Activated CD4-positive, alpha-beta memory T cell treated with anti-CD3 and anti-CD28 coated beads for 36 hours (primary cell): ENCODE measurements at regions of chr7 and their contacts with region 1.

Region 1: GRCh38 chr7:92708111-92709042 is 118.2 kb upstream of the FAM133B start:
- DNase-seq: no peak
- H3K4me3 Mint-ChIP-seq: no peak overlapping the region
- H3K27ac Mint-ChIP-seq: peak overlapping the region; percentile 88
- H3K4me1 Mint-ChIP-seq: peaks cover 55% of the 10 kb centered on the region
- H3K27me3 Mint-ChIP-seq: no peaks in the 10 kb centered on the region

Region 2: DNA sequence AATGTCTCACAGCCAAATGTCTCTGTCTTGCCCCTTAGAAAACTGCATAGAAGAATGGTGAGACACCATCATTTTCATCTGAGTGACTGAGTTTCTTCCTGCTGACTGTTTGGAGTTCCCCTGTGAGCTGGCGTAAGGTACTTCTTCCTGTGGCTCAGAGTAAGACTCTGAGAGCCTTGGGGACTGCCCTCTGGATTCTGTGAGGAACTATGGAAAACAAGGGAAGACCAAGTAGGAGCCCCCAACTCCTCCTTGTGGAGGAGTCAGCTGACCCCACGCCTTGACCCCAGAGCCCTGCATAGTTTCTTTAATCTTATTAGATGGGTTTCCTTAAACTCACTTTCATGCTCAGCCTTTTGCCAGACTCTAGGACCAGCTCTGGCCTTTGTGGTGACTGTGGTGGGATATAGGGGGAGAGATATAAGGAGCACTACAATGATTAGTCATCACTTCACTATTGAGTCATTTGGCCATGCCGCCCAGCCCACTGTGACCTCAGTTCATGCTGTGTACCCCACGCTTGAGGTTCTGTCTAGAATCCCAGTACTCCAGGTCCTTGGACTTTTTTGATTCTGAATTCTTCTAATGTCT is 66.4 kb before region 1 on chr7:
- CTCF ChIA-PET with region 1: no interaction called
- POLR2A ChIA-PET with region 1: interaction called, 3 read pairs
- intact Hi-C with region 1: loop called (anchors 1 kb)
- DNase-seq: peak; percentile 84
- H3K4me3 Mint-ChIP-seq: peak overlapping the region; percentile 9
- H3K27ac Mint-ChIP-seq: peak overlapping the region; percentile 96
- H3K4me1 Mint-ChIP-seq: peaks cover 86% of the 10 kb centered on the region
- H3K27me3 Mint-ChIP-seq: no peaks in the 10 kb centered on the region

Region 3: DNA sequence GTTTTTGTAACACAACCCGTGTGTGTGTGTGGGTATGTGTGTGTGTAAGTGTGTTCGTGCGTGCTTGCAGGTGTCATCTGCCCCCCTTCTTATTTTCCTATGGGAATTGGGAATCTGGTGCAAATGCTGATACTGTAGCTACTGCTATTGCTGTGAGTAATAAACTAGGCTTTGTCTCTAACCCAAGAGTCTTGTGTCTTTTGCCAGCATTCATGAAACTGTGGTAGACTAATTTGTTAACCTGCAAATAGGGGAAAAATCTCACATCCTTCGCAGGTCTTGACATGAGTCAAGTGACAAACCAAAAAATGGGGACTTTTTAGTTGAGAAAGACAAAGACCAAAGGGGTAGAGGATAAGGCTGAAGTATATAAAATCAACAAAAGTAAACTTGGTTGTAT is 60.3 kb before region 1 on chr7:
- CTCF ChIA-PET with region 1: no interaction called
- POLR2A ChIA-PET with region 1: no interaction called
- intact Hi-C with region 1: loop called (anchors 1 kb)
- DNase-seq: no peak
- H3K4me3 Mint-ChIP-seq: peak overlapping the region; percentile 16
- H3K27ac Mint-ChIP-seq: peak overlapping the region; percentile 96
- H3K4me1 Mint-ChIP-seq: peaks cover 91% of the 10 kb centered on the region
- H3K27me3 Mint-ChIP-seq: no peaks in the 10 kb centered on the region

Region 4: GRCh38 chr7:92751902-92752901 is 43.8 kb after region 1 on chr7:
- CTCF ChIA-PET with region 1: no interaction called
- POLR2A ChIA-PET with region 1: no interaction called
- intact Hi-C with region 1: loop called (anchors 2 kb)
- DNase-seq: no peak
- H3K4me3 Mint-ChIP-seq: no peak overlapping the region
- H3K27ac Mint-ChIP-seq: peak overlapping the region; percentile 72
- H3K4me1 Mint-ChIP-seq: peaks cover 63% of the 10 kb centered on the region
- H3K27me3 Mint-ChIP-seq: no peaks in the 10 kb centered on the region

Region 5: DNA sequence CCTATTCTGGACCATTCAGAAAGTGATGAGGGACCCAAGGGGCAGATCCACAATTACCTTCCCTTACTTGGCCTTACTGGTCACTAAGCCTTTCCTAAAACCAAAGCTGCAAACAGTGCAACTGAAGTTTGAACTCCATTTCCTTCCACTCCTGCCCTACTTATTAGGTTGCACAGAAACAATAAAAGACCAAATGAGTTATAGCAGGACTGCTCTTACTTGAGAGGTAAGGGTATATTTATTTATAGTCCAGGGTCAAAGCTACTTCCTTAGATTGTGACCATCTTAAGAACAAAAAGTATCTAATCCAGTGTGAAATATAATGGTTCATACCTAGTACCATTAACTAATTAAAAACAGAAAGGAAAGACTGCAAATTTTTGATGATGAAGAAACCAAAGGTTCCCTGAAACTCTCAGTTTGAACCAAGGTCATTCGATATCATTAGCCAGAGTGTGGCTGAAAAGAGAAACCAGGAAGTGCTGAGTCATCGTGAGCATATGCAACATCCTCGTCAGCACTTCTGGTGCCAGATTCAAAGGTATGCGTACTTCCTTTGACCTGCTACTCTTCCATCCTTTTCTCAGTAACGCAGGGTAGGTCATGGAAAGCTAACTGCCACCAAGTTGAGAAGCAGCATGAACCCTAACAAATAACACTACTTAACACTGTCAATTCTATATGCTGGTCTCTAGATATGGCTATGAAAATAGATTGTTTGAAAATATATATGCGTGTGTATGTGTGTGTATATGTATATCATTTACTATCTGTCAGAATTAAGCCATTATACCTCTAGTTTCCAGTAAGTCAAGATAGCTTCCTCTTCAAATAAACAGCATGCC is 101.2 kb after region 1 on chr7:
- CTCF ChIA-PET with region 1: no interaction called
- POLR2A ChIA-PET with region 1: interaction called, 4 read pairs
- intact Hi-C with region 1: loop called (anchors 1 kb)
- DNase-seq: peak; percentile 83
- H3K4me3 Mint-ChIP-seq: peak overlapping the region; percentile 39
- H3K27ac Mint-ChIP-seq: peak overlapping the region; percentile 89
- H3K4me1 Mint-ChIP-seq: peaks cover 73% of the 10 kb centered on the region
- H3K27me3 Mint-ChIP-seq: no peaks in the 10 kb centered on the region

Region 6: GRCh38 chr7:93036807-93037206 is 328.4 kb after region 1 on chr7:
- CTCF ChIA-PET with region 1: no interaction called
- POLR2A ChIA-PET with region 1: no interaction called
- intact Hi-C with region 1: loop called (anchors 5 kb)
- DNase-seq: peak; percentile 64
- H3K4me3 Mint-ChIP-seq: no peak overlapping the region
- H3K27ac Mint-ChIP-seq: peak overlapping the region; percentile 53
- H3K4me1 Mint-ChIP-seq: peaks cover 22% of the 10 kb centered on the region
- H3K27me3 Mint-ChIP-seq: no peaks in the 10 kb centered on the region